ENCODE measurements at regions of chr1 and their contacts with region 1.

Region 1: DNA sequence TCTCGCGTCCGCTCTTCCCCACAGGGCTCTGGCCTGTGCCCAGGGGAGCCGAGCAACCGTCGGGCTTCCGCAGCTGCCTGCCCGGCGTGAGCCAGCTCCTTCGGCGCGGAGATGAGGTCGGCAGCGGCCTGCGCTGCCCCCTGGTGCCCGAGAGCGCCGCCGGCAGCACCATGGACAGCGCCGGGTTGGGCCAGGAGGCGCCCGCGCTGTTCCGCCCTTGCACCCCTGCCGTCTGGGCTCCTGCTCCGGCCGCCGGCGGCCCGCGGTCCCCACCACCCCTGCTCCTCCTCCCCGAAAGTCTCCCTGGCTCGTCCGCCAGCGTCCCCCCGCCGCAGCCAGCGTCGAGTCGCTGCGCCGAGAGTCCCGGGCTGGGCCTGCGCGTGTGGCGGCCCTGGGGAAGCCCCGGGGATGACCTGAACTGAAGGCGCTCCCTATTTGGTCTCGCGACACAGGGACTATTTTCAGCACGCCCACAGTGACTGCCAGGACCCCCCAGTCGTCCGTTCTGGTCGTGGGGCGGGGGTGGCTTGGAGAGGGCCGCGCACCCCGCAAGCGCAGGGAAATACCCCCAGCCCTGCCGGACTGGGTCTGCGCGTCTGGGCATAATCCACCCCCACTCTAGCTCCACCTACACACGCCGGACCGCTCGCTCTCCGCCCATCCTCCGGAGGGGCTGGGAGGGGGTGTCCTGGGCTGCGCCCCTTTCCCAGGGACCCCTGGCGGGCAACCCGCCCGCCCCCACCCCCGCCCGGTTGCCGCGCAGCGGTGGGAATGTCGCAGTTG is 1.3 kb downstream of the HES3 start:
- DNase-seq: peak; percentile 65 to 86
- ATAC-seq: peak; percentile 73 to 85 (median 78)
- H3K4me3 ChIP-seq: peak overlapping the region in 1 of 10 donors; percentile 3
- H3K27ac ChIP-seq: no peak overlapping the region
- H3K4me1 ChIP-seq: peaks cover 0 to 48% (median 34%) of the 10 kb centered on the region in 9 donors
- H3K27me3 ChIP-seq: peaks cover 24 to 96% (median 93%) of the 10 kb centered on the region in 7 donors
- CTCF ChIP-seq: peak; percentile 70 to 89 (median 82)

Region 2: GRCh38 chr1:6052543-6053205 is 192.6 kb before region 1 on chr1:
- intact Hi-C with region 1: loop called (anchors 1 to 10 kb)
- DNase-seq: peak; percentile 51 to 74
- ATAC-seq: peak in 5 of 8 donors; percentile 58 to 74 (median 66)
- H3K4me3 ChIP-seq: no peak overlapping the region
- H3K27ac ChIP-seq: no peak overlapping the region
- H3K4me1 ChIP-seq: peaks cover 0 to 21% (median 13%) of the 10 kb centered on the region in 9 donors
- H3K27me3 ChIP-seq: no peaks in the 10 kb centered on the region
- CTCF ChIP-seq: peak; percentile 18 to 67 (median 58)

Region 3: GRCh38 chr1:6185635-6186382 is 59.5 kb before region 1 on chr1:
- intact Hi-C with region 1: loop called in 1 of 10 experiments (anchors 10 kb)
- DNase-seq: no peak
- ATAC-seq: peak in 1 of 8 donors; percentile 29
- H3K4me3 ChIP-seq: no peak overlapping the region
- H3K27ac ChIP-seq: no peak overlapping the region
- H3K4me1 ChIP-seq: peaks cover 0 to 17% (median 6%) of the 10 kb centered on the region in 9 donors
- H3K27me3 ChIP-seq: peaks cover 0 to 13% (median 2%) of the 10 kb centered on the region in 7 donors
- CTCF ChIP-seq: peak in 7 of 9 donors; percentile 33 to 59 (median 51)

Region 4: GRCh38 chr1:6343506-6344405 is 98.5 kb after region 1 on chr1:
- intact Hi-C with region 1: loop called (anchors 1 to 2 kb)
- DNase-seq: peak; percentile 61
- ATAC-seq: peak; percentile 72 to 85 (median 78)
- H3K4me3 ChIP-seq: no peak overlapping the region
- H3K27ac ChIP-seq: no peak overlapping the region
- H3K4me1 ChIP-seq: peaks cover 0 to 13% (median 7%) of the 10 kb centered on the region in 9 donors
- H3K27me3 ChIP-seq: no peaks in the 10 kb centered on the region
- CTCF ChIP-seq: peak; percentile 67 to 90 (median 83)

Region 5: DNA sequence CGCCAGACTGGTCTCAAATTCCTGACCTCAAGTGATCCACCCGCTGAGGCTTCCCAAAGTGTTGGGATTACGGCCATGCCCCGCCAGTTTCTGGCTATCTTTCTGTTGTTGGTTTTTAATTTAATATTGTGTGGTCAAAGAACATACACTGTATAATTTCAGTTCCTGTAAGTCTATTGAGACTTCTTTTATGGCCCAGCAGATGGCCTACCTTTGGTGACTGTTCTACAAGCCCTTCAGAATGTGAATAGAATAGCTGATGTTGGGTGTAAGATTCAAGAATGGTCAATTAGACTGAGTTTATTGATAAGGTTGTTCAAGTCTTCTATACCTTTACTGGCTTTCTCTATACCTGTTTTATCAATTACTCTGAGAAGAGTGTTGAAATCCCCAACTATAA is 163.8 kb after region 1 on chr1:
- intact Hi-C with region 1: loop called in 9 of 10 experiments (anchors 1 to 10 kb)
- DNase-seq: no peak
- ATAC-seq: no peak
- H3K4me3 ChIP-seq: no peak overlapping the region
- H3K27ac ChIP-seq: no peak overlapping the region
- H3K4me1 ChIP-seq: no peaks in the 10 kb centered on the region
- H3K27me3 ChIP-seq: peaks cover 0 to 54% (median 35%) of the 10 kb centered on the region in 7 donors
- CTCF ChIP-seq: no peak

Region 6: DNA sequence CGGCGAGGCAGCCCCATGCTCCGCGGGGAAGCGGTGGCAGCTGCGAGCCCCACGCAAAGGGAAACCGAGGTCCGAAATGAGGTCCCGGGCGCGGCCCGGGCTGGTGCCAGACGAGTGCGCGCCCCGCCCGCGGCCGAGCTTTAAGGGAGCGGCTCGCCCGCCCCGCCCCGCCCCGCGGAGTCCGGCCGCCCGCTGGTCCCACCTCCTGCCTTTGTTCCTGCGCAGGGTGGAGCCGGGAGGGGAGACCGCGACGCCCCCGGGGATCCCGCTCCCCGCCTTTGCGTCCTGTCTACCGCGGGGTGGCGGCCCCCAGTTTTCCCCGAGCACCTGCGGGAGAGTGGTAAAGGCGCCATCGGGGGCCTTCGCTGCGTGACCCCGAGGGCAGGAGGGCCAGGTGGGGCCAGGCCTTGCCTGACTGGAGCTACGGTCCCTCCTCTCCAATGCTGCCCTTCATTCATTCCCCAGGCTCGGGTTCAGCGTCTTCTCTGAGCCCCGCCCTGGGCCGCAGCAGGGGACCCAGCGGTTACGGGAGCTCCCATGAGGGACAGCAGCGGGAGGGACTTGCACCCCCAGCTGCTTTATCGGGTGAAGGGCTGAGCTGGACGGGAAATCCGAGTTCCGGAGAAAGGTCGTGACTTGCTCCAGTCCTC is 174.7 kb after region 1 on chr1 and contains the start of gene HES2:
- intact Hi-C with region 1: loop called in 1 of 10 experiments (anchors 5 kb)
- DNase-seq: no peak
- ATAC-seq: peak in 6 of 8 donors; percentile 39 to 66 (median 48)
- H3K4me3 ChIP-seq: peak within 1 kb of the TSS; percentile 23 to 55 (median 44)
- H3K27ac ChIP-seq: no peak within 1 kb of the TSS
- H3K4me1 ChIP-seq: peaks cover 27 to 44% (median 40%) of the 10 kb centered on the region in 9 donors
- H3K27me3 ChIP-seq: peaks cover 59 to 100% (median 98%) of the 10 kb centered on the region in 7 donors
- CTCF ChIP-seq: no peak
- total RNA-seq, gene HES2: 0.25 TPM in 1 of 10 donors, not detected in the others